Activated B cell treated with CpG ODN at 0.5 μM for 24 hours (primary cell): ENCODE measurements at regions of chr14 and their contacts with region 1.

Region 1: DNA sequence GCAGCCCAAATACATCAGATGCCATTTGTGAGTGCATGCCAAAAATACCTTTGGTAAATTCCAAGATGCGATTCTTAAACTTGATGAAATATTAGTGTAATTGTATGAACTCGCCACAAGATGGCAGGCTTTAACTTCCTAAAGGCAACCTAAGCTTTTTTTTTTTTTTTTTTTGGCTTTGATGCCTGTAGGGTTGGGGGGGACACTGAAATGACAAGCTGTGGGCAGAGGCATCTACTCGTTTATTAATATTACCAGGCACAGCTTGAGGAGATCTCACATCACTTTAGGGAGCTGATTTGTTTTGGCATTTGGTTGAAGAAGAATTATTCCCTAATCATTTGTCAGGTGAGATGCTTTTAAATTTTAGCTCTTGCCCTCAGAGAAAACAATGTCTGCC is 126.7 kb upstream of the CCDC196 start:
- DNase-seq: no peak
- ATAC-seq: no peak
- H3K4me3 Mint-ChIP-seq: no peak overlapping the region
- H3K27ac Mint-ChIP-seq: no peak overlapping the region
- H3K4me1 Mint-ChIP-seq: no peaks in the 10 kb centered on the region
- H3K27me3 Mint-ChIP-seq: no peaks in the 10 kb centered on the region
- CTCF ChIP-seq: peak; percentile 46

Region 2: DNA sequence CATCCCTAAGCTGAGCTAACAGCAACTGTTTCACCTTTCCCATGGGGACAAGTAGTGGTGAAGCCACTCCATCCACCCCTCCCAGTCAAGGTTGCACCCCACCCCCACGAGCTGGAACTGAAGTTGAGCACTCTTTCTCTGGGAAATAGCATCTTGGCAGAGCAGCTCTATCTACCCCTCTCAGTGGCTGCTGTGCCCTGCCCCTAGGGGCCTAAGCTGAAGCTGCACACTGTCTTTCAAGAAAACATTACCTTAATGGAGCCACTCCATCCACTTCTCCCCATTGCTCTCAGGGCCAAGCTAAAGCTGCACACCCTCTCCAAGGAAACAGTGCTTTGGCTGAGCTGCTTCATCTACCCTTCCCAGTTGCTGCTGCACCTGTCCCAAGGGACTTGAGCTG is 44.0 kb before region 1 on chr14:
- CTCF ChIA-PET with region 1: no interaction called
- POLR2A ChIA-PET with region 1: no interaction called
- intact Hi-C with region 1: no loop called
- DNase-seq: no peak
- ATAC-seq: no peak
- H3K4me3 Mint-ChIP-seq: no peak overlapping the region
- H3K27ac Mint-ChIP-seq: no peak overlapping the region
- H3K4me1 Mint-ChIP-seq: no peaks in the 10 kb centered on the region
- H3K27me3 Mint-ChIP-seq: no peaks in the 10 kb centered on the region
- CTCF ChIP-seq: no peak

Region 3: DNA sequence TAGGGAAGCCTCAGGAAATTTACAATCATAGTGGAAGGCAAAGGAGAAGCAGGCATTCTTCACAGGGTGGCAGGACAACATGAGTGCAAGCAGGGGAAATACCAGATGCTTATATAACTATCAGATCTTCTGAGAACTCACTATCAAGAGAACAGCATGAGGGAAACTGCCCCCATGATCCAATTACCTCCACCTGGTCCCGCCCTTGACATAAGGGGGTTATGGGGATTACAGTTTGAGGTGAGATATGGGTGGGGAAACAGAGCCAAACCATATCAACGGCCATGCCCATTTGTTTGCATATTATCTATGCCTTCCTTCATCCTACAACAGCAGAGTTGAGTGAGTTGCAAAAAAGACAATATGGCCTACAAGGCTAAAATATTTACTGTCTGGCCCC is 13.5 kb before region 1 on chr14:
- CTCF ChIA-PET with region 1: interaction called, 15 read pairs
- POLR2A ChIA-PET with region 1: no interaction called
- intact Hi-C with region 1: no loop called
- DNase-seq: no peak
- ATAC-seq: no peak
- H3K4me3 Mint-ChIP-seq: no peak overlapping the region
- H3K27ac Mint-ChIP-seq: no peak overlapping the region
- H3K4me1 Mint-ChIP-seq: no peaks in the 10 kb centered on the region
- H3K27me3 Mint-ChIP-seq: no peaks in the 10 kb centered on the region
- CTCF ChIP-seq: no peak

Region 4: DNA sequence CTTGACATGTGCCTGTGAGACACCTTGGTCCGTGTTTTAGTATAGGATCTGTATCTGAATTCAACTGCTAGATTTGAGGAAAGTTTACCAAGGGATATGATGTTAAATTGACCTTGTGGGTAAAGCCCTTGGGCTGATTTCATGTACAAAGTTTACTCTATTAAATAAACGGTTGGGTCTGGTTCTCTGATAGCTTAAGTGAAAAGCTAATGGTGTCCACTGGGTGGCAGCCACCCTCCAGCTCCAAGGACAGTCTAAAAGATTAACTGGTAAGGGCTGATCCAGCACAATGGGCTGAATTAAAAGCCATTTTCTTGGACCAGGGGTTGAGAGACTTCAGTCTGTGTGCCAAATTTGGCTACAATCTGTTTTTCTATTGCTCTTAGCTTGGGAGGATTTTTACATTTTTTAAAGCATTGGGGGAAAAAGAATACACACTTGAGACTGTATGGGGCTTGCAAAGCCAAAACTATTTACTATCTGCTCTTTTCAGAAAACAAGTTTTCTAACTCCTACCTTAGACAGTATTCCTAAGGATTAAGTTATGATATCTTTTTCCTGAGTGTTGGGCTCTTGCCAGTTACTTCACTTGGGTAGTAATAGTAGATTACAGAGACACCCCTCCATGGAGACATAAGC is 264.9 kb after region 1 on chr14:
- CTCF ChIA-PET with region 1: interaction called, 3 read pairs
- POLR2A ChIA-PET with region 1: no interaction called
- intact Hi-C with region 1: loop called (anchors 1 kb)
- DNase-seq: no peak
- ATAC-seq: peak; percentile 45
- H3K4me3 Mint-ChIP-seq: no peak overlapping the region
- H3K27ac Mint-ChIP-seq: no peak overlapping the region
- H3K4me1 Mint-ChIP-seq: no peaks in the 10 kb centered on the region
- H3K27me3 Mint-ChIP-seq: no peaks in the 10 kb centered on the region
- CTCF ChIP-seq: no peak

Region 5: GRCh38 chr14:67112344-67112743 is 752.8 kb after region 1 on chr14:
- CTCF ChIA-PET with region 1: interaction called, 10 read pairs
- POLR2A ChIA-PET with region 1: no interaction called
- intact Hi-C with region 1: no loop called
- DNase-seq: no peak
- ATAC-seq: no peak
- H3K4me3 Mint-ChIP-seq: no peak overlapping the region
- H3K27ac Mint-ChIP-seq: no peak overlapping the region
- H3K4me1 Mint-ChIP-seq: no peaks in the 10 kb centered on the region
- H3K27me3 Mint-ChIP-seq: no peaks in the 10 kb centered on the region
- CTCF ChIP-seq: no peak

Region 6: GRCh38 chr14:67137744-67138371 is 778.4 kb after region 1 on chr14:
- CTCF ChIA-PET with region 1: no interaction called
- POLR2A ChIA-PET with region 1: no interaction called
- intact Hi-C with region 1: loop called (anchors 1 kb)
- DNase-seq: no peak
- ATAC-seq: no peak
- H3K4me3 Mint-ChIP-seq: no peak overlapping the region
- H3K27ac Mint-ChIP-seq: no peak overlapping the region
- H3K4me1 Mint-ChIP-seq: no peaks in the 10 kb centered on the region
- H3K27me3 Mint-ChIP-seq: no peaks in the 10 kb centered on the region
- CTCF ChIP-seq: no peak

Region 7: DNA sequence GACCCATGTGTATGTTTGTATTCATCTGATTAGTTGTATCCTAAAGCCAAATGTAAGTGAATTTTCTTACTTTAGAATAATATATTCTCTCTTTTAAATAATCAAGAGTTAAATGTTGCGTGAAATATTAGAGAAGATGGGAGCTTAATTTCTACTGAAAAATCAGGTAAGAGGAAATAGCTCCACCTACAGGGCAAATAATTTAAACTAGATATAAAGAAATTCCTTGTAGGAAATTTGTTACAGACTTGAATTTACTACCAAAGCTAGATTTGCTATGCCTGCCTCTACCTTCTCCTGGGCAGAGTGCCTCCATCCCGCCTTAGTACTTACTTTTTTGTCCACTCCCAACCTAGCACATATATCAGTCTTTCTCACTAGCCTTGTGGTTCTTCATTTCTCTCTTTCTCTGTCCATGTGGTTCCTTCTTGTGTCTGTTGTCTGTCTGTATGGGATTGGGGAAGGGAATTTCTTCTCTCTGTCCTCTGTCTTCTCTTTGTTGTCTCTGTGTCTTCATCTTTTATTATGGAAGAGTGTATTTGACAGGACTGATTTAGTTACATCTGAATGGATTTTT is 926.5 kb after region 1 on chr14:
- CTCF ChIA-PET with region 1: interaction called, 39 read pairs
- POLR2A ChIA-PET with region 1: no interaction called
- intact Hi-C with region 1: loop called (anchors 1 kb)
- DNase-seq: no peak
- ATAC-seq: no peak
- H3K4me3 Mint-ChIP-seq: no peak overlapping the region
- H3K27ac Mint-ChIP-seq: no peak overlapping the region
- H3K4me1 Mint-ChIP-seq: no peaks in the 10 kb centered on the region
- H3K27me3 Mint-ChIP-seq: no peaks in the 10 kb centered on the region
- CTCF ChIP-seq: peak; percentile 40

Region 8: GRCh38 chr14:67335781-67336180 is 976.3 kb after region 1 on chr14:
- CTCF ChIA-PET with region 1: interaction called, 3 read pairs
- POLR2A ChIA-PET with region 1: no interaction called
- intact Hi-C with region 1: loop called (anchors 2 kb)
- DNase-seq: no peak
- ATAC-seq: no peak
- H3K4me3 Mint-ChIP-seq: no peak overlapping the region
- H3K27ac Mint-ChIP-seq: no peak overlapping the region
- H3K4me1 Mint-ChIP-seq: no peaks in the 10 kb centered on the region
- H3K27me3 Mint-ChIP-seq: no peaks in the 10 kb centered on the region
- CTCF ChIP-seq: no peak